ENCODE measurements at regions of chr4 and their contacts with region 1.

Region 1: GRCh38 chr4:5685296-5685695 is 23.1 kb downstream of the EVC2 start:
- DNase-seq: no peak
- H3K4me3 ChIP-seq: no peak overlapping the region
- H3K27ac ChIP-seq: no peak overlapping the region
- H3K4me1 ChIP-seq: no peaks in the 10 kb centered on the region
- H3K27me3 ChIP-seq: no peaks in the 10 kb centered on the region
- CTCF ChIP-seq: no peak

Region 2: DNA sequence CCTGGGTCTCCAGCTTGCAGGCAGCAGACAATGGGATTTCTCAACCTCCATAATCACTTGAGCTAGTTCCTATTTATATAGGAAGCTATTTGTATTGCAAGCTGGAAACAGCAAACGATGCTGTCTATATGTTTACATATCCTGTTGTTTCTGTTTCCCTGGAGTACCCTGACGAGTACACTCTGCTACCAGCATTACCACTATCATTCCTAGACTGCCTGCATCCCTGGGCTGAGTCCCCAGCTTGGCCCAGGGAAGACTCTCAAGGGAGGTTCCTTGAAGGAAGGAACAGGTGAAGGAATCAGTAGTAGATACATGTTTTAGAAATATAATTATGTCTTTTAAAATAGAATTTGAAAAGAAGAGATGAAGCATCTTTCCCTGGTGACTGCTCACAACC is 58.4 kb before region 1 on chr4:
- CTCF ChIA-PET with region 1: no interaction called
- dilution Hi-C with region 1: loop called (anchors 5 kb)
- in situ Hi-C with region 1: no loop called
- intact Hi-C with region 1: no loop called
- DNase-seq: no peak
- H3K4me3 ChIP-seq: no peak overlapping the region
- H3K27ac ChIP-seq: no peak overlapping the region
- H3K4me1 ChIP-seq: no peaks in the 10 kb centered on the region
- H3K27me3 ChIP-seq: no peaks in the 10 kb centered on the region
- CTCF ChIP-seq: no peak

Region 3: DNA sequence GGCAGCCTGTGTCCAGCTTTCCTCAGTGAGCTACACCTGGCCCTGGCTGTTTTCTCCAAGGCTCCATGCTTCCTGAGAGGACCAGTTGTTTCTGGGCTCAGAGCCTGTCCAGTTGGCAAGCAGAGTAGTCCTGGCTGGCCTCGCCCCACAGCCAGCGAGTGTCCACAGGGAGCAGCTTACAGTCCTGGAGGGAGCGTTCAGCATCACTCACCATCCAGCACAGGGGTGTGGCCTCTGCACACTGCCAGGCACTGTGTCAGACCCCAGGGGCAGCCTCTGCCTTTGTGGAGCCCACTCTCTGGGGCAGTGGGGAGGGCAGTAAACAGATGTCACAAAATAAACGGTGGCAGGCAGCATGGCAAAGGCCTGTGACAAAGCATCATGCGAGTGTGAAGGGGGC is 49.6 kb after region 1 on chr4:
- CTCF ChIA-PET with region 1: no interaction called
- dilution Hi-C with region 1: loop called (anchors 5 kb)
- in situ Hi-C with region 1: no loop called
- intact Hi-C with region 1: no loop called
- DNase-seq: no peak
- H3K4me3 ChIP-seq: no peak overlapping the region
- H3K27ac ChIP-seq: no peak overlapping the region
- H3K4me1 ChIP-seq: no peaks in the 10 kb centered on the region
- H3K27me3 ChIP-seq: no peaks in the 10 kb centered on the region
- CTCF ChIP-seq: no peak

Measured in mammary epithelial cell (primary cell).